ENCODE measurements at regions of chr5 and their contacts with region 1.

Region 1: GRCh38 chr5:153480401-153480800 is 10.1 kb upstream of the GRIA1 start:
- DNase-seq: peak; percentile 53
- CTCF ChIP-seq: no peak

Region 2: DNA sequence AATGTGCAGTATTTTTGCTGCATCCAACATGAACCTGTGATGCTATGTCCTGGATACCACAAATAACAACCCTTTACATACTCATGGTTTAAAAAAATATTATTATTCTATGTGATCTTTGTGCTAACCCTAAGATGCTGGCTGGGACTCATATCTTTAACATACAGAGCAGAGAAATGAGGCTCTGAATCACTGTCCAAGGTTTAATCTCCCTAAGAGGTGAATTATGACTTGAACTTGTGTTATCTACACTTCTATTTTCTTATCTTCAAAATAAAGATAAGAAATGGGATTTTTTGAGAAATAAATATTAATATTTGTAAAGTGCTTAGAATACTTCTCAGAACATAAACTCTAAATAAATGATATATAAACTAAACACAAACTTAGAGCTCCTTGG is 58.7 kb before region 1 on chr5:
- CTCF ChIA-PET with region 1: no interaction called
- POLR2A ChIA-PET with region 1: no interaction called
- DNase-seq: no peak
- CTCF ChIP-seq: no peak

Region 3: DNA sequence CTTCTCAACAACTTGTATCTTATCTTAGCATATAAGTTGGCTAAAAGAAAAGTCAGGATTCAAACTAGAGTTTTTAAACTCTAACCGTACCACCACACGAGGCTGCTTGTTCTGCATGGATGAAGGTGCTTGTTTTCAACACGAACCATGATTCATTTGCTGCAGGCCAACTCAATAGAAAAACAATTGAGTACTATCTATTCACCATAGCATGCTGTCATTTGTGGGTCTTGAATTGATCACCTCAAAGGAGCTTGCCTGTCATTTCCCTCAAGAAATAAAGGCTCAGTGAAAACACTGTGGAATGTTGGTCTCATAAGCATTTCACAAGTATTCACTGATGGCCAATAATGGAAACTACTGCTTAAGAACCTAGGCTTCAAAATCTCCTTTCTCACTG is 11.0 kb before region 1 on chr5:
- CTCF ChIA-PET with region 1: interaction called, 10 read pairs
- POLR2A ChIA-PET with region 1: no interaction called
- DNase-seq: no peak
- CTCF ChIP-seq: no peak

Region 4: GRCh38 chr5:153496835-153497234 is 16.4 kb after region 1 on chr5:
- CTCF ChIA-PET with region 1: interaction called, 24 read pairs
- POLR2A ChIA-PET with region 1: no interaction called
- DNase-seq: no peak
- CTCF ChIP-seq: peak; percentile 51

Region 5: GRCh38 chr5:154221371-154221896 is 741.0 kb after region 1 on chr5:
- CTCF ChIA-PET with region 1: no interaction called
- POLR2A ChIA-PET with region 1: no interaction called
- DNase-seq: no peak
- CTCF ChIP-seq: no peak